Activated naive CD4-positive, alpha-beta T cell treated with anti-CD3 and anti-CD28 coated beads, Interleukin-2, amount 10 ng/mL, durations not matched to agents 7 days and 5 days (primary cell): ENCODE measurements at regions of chr21 and their contacts with region 1.

Region 1: GRCh38 chr21:17679002-17679600 is 66.4 kb upstream of the BTG3 start:
- DNase-seq: no peak
- H3K4me3 Mint-ChIP-seq: no peak overlapping the region
- H3K27ac Mint-ChIP-seq: no peak overlapping the region
- H3K4me1 Mint-ChIP-seq: no peaks in the 10 kb centered on the region
- H3K27me3 Mint-ChIP-seq: no peaks in the 10 kb centered on the region

Region 2: DNA sequence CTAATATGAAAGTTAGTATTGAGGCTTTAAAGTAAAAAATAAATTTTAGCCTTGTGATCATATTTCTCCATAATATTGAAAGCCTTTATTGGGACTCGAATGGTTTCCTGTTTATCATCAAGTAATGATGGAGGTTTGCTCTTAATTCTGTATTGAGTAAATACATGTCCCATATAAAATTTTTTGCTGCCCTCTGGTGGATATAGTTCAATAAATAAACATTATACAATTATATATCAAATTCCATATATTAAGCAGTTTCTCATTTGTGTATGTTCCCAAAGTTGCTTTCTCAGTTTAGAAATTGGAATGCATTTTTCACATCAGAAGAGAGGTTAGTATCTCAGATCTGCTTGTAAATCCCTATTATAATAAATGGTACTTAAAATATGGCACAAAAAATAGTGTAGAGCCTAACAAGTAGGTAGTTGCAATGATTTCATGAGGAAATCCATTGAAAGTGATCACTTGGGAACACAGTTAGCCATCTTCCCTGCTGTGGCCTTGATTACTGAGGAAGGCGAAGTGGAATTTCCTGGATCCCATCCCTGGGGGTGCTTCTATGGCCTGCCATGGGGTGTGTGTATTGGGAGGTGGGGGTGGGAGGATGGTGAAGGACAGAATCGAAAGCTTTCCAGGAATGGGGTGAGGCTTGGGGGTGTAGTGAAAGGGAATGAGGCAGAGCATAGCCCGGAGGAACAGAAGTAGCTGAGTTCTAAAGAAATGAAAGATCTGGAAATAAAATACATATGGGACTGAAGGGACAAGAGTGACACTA is 224.1 kb after region 1 on chr21:
- CTCF ChIA-PET with region 1: interaction called, 45 read pairs
- DNase-seq: no peak
- H3K4me3 Mint-ChIP-seq: no peak overlapping the region
- H3K27ac Mint-ChIP-seq: no peak overlapping the region
- H3K4me1 Mint-ChIP-seq: peaks cover 22% of the 10 kb centered on the region
- H3K27me3 Mint-ChIP-seq: no peaks in the 10 kb centered on the region